Natural killer cell (primary cell): ENCODE measurements at regions of chr7 and their contacts with region 1.

Region 1: DNA sequence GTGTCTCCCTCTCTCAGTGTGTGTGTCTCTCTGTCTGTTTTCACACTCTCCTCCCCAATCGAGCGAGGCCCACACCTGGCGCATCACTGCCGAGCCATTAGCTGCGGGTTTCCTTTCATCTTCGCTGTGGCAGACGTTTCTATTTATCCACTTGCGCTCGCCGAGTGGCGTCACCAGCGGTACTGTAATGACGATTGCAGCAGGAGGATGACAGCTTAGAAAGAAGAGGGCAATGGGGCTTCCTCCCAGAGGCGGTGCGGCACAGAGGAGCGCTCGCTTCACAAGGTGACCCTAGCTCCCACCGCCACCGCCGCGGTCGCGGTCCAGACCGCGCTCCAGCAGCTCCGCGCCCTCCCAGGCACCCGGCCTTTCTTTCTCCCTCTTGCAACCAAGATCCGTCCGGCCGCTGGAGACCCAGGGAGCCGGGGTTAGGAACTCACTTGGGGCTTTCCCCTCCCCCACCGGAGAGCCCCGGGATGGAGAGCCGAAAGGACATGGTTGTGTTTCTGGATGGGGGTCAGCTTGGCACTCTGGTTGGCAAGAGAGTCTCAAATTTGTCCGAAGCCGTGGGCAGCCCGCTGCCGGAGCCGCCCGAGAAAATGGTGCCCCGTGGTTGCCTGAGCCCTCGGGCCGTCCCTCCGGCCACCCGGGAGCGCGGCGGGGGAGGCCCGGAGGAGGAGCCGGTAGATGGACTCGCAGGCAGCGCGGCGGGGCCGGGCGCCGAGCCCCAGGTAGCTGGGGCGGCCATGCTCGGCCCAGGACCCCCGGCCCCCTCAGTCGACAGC is at the start of gene EVX1:
- DNase-seq: peak in 1 of 2 donors; percentile 60
- ATAC-seq: peak in 1 of 3 donors; percentile 56
- H3K4me3 ChIP-seq: no peak within 1 kb of the TSS
- H3K4me3 Mint-ChIP-seq: no peak within 1 kb of the TSS
- H3K27ac ChIP-seq: no peak within 1 kb of the TSS
- H3K27ac Mint-ChIP-seq: peak within 1 kb of the TSS in 1 of 2 donors; percentile 13
- H3K4me1 ChIP-seq: peaks cover 21% of the 10 kb centered on the region
- H3K4me1 Mint-ChIP-seq: peaks cover 0 to 5% of the 10 kb centered on the region in 2 donors
- H3K27me3 ChIP-seq: peaks cover 76% of the 10 kb centered on the region
- H3K27me3 Mint-ChIP-seq: peaks cover 67 to 73% of the 10 kb centered on the region in 2 donors
- CTCF ChIP-seq: no peak
- total RNA-seq, gene EVX1: not detected

Region 2: GRCh38 chr7:25851332-25852210 is 1391.2 kb before region 1 on chr7:
- intact Hi-C with region 1: loop called (anchors 5 kb)
- DNase-seq: peak in 1 of 2 donors; percentile 74
- ATAC-seq: peak in 2 of 3 donors; percentile 37 to 49
- H3K4me3 ChIP-seq: no peak overlapping the region
- H3K4me3 Mint-ChIP-seq: no peak overlapping the region
- H3K27ac ChIP-seq: no peak overlapping the region
- H3K27ac Mint-ChIP-seq: peak overlapping the region in 1 of 2 donors; percentile 54
- H3K4me1 ChIP-seq: peaks cover 13% of the 10 kb centered on the region
- H3K4me1 Mint-ChIP-seq: peaks cover 0 to 8% of the 10 kb centered on the region in 2 donors
- H3K27me3 ChIP-seq: peaks cover 53% of the 10 kb centered on the region
- H3K27me3 Mint-ChIP-seq: peaks cover 56 to 63% of the 10 kb centered on the region in 2 donors
- CTCF ChIP-seq: no peak

Region 3: DNA sequence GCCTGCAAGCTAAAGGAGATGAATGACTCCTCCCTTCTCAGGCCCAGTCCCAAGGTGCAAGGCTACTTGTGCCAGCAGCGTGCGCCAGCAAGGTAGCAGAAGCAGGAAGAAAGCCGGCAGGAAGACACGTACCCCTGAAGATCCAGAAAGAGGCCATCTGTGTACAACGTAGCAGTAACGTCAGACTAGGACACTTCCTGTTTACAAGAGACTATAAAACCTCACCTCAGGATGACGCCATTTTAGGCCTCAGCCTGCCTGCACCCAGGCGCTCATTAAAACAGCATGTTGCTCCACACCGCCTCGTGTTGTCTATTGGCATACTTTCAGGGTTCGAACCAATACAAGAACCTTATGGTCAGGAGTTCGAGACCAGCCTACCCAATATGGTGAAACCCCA is 992.5 kb before region 1 on chr7:
- intact Hi-C with region 1: no loop called
- DNase-seq: no peak
- ATAC-seq: peak in 1 of 3 donors; percentile 35
- H3K4me3 ChIP-seq: no peak overlapping the region
- H3K4me3 Mint-ChIP-seq: no peak overlapping the region
- H3K27ac ChIP-seq: no peak overlapping the region
- H3K27ac Mint-ChIP-seq: no peak overlapping the region
- H3K4me1 ChIP-seq: no peaks in the 10 kb centered on the region
- H3K4me1 Mint-ChIP-seq: no peaks in the 10 kb centered on the region
- H3K27me3 ChIP-seq: no peaks in the 10 kb centered on the region
- H3K27me3 Mint-ChIP-seq: peaks cover 0 to 1% of the 10 kb centered on the region in 2 donors
- CTCF ChIP-seq: no peak

Region 4: GRCh38 chr7:27143023-27143949 is 99.5 kb before region 1 on chr7 and contains the start of gene HOXA5:
- intact Hi-C with region 1: no loop called
- DNase-seq: peak in 1 of 2 donors; percentile 18
- ATAC-seq: peak; percentile 72 to 87 (median 80)
- H3K4me3 ChIP-seq: no peak within 1 kb of the TSS
- H3K4me3 Mint-ChIP-seq: peak within 1 kb of the TSS; percentile 76
- H3K27ac ChIP-seq: no peak within 1 kb of the TSS
- H3K27ac Mint-ChIP-seq: peak within 1 kb of the TSS in 1 of 2 donors; percentile 57
- H3K4me1 ChIP-seq: peaks cover 16% of the 10 kb centered on the region
- H3K4me1 Mint-ChIP-seq: peaks cover 0 to 14% of the 10 kb centered on the region in 2 donors
- H3K27me3 ChIP-seq: peaks cover 16% of the 10 kb centered on the region
- H3K27me3 Mint-ChIP-seq: peaks cover 46 to 52% of the 10 kb centered on the region in 2 donors
- CTCF ChIP-seq: no peak
- total RNA-seq, gene HOXA5: 0.29 to 13.0 (median 0.52) TPM

Region 5: DNA sequence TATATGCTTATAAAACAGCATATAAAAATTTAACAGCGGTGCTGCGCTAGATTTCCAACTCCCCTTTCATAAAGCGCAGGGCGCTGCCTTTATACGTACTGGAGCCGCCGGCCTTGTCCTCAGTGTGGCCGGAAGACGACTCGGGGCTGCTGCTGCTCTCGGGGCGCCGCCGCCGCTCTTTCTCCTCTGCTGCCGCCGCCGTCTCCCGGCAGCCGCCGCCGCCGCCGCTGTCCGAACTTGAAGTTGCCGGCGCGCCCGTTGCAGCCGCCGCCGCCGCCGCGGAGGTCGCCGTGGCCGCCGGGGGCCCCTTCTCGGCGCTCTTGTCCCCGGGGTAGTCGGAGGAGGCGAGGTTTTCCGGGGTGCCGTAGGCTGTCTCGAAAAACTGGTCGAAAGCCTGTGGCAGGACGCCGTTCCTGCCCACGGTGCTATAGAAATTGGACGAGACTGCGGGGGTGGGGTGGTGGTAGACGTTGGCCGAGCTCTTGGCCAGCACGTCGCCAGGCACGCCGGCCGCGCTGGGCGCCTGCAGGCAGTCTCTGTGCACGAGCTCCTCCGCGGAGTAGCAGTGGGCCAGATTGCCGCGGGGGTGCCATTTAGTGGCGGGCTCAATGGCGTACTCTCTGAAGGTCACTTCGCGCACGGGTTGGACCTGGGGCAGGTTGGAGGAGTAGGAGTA is 58.3 kb before region 1 on chr7:
- intact Hi-C with region 1: no loop called
- DNase-seq: peak; percentile 29 to 55
- ATAC-seq: peak; percentile 46 to 57 (median 46)
- H3K4me3 ChIP-seq: peak overlapping the region; percentile 30
- H3K4me3 Mint-ChIP-seq: peak overlapping the region; percentile 81
- H3K27ac ChIP-seq: no peak overlapping the region
- H3K27ac Mint-ChIP-seq: peak overlapping the region; percentile 31 to 58
- H3K4me1 ChIP-seq: peaks cover 61% of the 10 kb centered on the region
- H3K4me1 Mint-ChIP-seq: peaks cover 44 to 55% of the 10 kb centered on the region in 2 donors
- H3K27me3 ChIP-seq: peaks cover 89% of the 10 kb centered on the region
- H3K27me3 Mint-ChIP-seq: peaks cover 73 to 80% of the 10 kb centered on the region in 2 donors
- CTCF ChIP-seq: no peak